ENCODE measurements at regions of chr18 and their contacts with region 1.

Region 1: DNA sequence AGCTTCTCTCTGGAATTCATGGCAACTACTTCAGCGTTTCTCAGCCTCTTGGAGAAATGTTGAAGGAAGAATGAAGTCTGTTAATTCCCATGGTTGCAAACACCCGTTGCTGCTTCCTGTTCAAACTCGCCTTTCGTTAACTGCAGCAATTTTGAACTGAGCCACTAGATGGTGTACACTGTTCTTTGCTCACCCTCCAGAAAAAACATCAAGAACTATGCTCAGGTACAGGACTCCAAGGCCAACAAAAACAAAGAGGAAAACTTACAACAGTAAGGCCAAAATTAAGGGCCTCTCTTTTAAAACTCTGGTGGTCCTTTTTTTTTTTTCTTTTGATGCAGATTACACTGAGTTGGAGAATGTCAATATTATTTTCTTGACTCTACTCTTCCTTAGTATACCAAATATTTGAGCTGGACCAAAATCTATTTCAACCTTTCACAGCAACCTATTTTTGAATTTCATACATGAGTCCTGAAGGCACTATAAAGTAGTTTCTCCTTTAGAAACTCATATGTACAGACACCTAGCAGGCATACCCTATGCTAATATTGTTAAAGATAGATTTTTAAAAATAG is 58.2 kb downstream of the KLHL14 start:
- DNase-seq: peak; percentile 74
- H3K4me3 Mint-ChIP-seq: no peak overlapping the region
- H3K27ac Mint-ChIP-seq: no peak overlapping the region
- H3K4me1 Mint-ChIP-seq: no peaks in the 10 kb centered on the region
- H3K27me3 Mint-ChIP-seq: peaks cover 4% of the 10 kb centered on the region
- CTCF ChIP-seq: peak; percentile 64

Region 2: GRCh38 chr18:32735781-32736180 is 21.1 kb after region 1 on chr18:
- CTCF ChIA-PET with region 1: interaction called, 14 read pairs
- POLR2A ChIA-PET with region 1: no interaction called
- intact Hi-C with region 1: no loop called
- DNase-seq: peak; percentile 43
- H3K4me3 Mint-ChIP-seq: no peak overlapping the region
- H3K27ac Mint-ChIP-seq: no peak overlapping the region
- H3K4me1 Mint-ChIP-seq: peaks cover 15% of the 10 kb centered on the region
- H3K27me3 Mint-ChIP-seq: peaks cover 10% of the 10 kb centered on the region
- CTCF ChIP-seq: no peak

Region 3: DNA sequence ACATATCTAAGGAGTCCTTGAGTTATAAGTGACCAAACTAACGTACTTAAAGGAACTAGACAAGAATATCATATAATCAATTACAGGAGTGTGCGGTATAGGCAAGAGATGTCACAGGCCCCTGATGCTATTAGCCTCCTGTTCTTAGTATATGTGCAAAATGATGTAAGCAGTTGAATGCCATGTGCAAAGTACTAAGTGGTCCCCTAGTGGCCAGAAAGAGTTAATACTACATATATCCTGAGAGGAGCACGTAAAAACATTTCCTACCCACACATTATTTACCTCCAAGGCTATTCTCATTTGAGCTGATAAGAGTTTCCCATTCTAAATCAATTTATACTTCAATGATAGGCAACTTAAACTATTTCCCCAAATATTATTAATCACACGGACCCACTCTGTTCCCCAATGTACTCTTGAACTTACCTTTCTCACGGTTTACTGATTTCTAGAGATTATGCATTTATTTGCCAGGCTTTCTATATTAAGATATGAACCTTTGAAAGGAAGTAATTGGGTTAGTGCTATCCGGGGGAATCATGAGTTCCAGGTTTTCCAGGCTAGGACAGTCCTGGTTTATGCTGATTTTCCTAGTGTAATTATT is 216.1 kb after region 1 on chr18:
- CTCF ChIA-PET with region 1: interaction called, 14 read pairs
- POLR2A ChIA-PET with region 1: interaction called, 4 read pairs
- intact Hi-C with region 1: loop called (anchors 1 kb)
- DNase-seq: peak; percentile 39
- H3K4me3 Mint-ChIP-seq: no peak overlapping the region
- H3K27ac Mint-ChIP-seq: no peak overlapping the region
- H3K4me1 Mint-ChIP-seq: peaks cover 5% of the 10 kb centered on the region
- H3K27me3 Mint-ChIP-seq: peaks cover 17% of the 10 kb centered on the region
- CTCF ChIP-seq: peak; percentile 61

Region 4: DNA sequence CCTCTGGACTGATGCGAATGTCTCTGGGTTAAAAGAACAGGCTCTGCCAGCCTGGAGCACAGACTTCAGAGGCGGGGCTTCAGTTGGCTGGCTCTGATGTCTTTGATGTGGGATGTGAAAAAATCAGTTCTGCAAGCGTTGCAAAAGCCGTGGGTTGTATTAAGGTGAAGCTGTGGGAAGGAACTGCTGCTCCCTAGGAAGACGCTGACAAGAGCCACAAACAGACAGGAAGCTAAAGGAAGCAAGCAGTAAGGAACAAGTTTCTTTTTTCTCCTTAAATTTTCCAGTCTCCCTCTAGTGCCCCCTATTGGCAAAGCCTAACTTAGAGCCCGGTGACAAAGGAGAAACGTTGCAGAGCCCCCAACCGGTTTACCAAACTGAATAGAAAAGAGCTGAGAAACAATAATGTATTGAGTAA is 486.9 kb after region 1 on chr18:
- CTCF ChIA-PET with region 1: no interaction called
- POLR2A ChIA-PET with region 1: no interaction called
- intact Hi-C with region 1: loop called (anchors 5 kb)
- DNase-seq: peak; percentile 38
- H3K4me3 Mint-ChIP-seq: no peak overlapping the region
- H3K27ac Mint-ChIP-seq: no peak overlapping the region
- H3K4me1 Mint-ChIP-seq: no peaks in the 10 kb centered on the region
- H3K27me3 Mint-ChIP-seq: peaks cover 76% of the 10 kb centered on the region
- CTCF ChIP-seq: peak; percentile 43